AG04449 (cell line): ENCODE measurements at regions of chr5 and their contacts with region 1.

Region 1: GRCh38 chr5:132526290-132526973 is 16.9 kb downstream of the IL5 start:
- DNase-seq: no peak
- H3K4me3 ChIP-seq: peak overlapping the region; percentile 6; the same call in 1 of the 2 replicates
- CTCF ChIP-seq: peak; percentile 53

Region 2: GRCh38 chr5:132500931-132501630 is 25.4 kb before region 1 on chr5:
- CTCF ChIA-PET with region 1: interaction called, 13 read pairs
- POLR2A ChIA-PET with region 1: no interaction called
- DNase-seq: no peak
- H3K4me3 ChIP-seq: no peak overlapping the region
- CTCF ChIP-seq: peak; percentile 76

Region 3: DNA sequence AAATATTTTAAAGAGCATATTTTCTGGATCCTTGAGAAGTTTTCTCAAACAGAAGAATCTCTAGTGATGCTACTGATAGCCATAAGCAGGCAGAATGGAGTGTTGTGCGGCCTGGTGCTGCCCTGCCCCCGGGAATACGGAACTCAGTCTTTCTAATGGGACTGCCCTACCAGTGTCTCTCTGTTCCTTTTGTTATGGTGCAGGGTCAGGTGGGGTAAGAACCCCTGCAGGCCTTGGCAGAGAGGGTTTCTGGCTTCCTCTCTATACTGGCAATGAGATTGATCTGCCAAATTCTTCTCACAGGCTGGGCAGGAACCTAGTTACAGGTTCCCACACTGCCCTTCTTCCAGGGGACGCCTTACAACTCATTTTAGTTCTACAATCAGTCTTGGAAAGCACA is 14.3 kb after region 1 on chr5:
- CTCF ChIA-PET with region 1: interaction called, 62 read pairs
- POLR2A ChIA-PET with region 1: no interaction called
- DNase-seq: no peak
- H3K4me3 ChIP-seq: no peak overlapping the region
- CTCF ChIP-seq: no peak

Region 4: GRCh38 chr5:132556763-132557477 is 30.5 kb after region 1 on chr5 and contains the start of gene RAD50:
- CTCF ChIA-PET with region 1: interaction called, 16 read pairs
- POLR2A ChIA-PET with region 1: no interaction called
- DNase-seq: peak; percentile 23
- H3K4me3 ChIP-seq: peak within 1 kb of the TSS; percentile 82
- CTCF ChIP-seq: no peak